RWPE1 (cell line): ENCODE measurements at regions of chr6 and their contacts with region 1.

Region 1: DNA sequence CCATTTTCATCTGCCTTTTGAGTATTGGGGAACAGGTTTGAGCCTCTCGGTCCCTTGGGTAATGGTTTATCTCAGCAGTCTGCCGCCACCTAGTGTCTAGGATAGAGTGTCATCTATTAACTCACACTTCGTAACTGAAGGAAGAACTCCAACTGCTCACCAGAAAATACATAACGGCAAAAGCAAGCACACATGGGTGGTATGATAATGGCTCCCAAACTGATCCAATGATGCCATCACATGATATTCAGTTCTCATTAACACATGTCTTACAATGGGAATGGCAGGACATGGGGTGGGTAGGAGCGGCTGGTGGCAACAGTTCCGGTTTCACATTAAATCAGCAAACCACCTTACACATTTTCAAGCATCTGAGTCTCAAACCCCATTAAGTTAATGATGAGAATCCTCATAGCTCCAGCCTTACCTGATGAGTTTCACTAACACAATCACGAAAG is 110.7 kb upstream of the PHACTR1 start:
- DNase-seq: peak; percentile 60
- H3K27ac ChIP-seq: no peak overlapping the region
- CTCF ChIP-seq: peak; percentile 78

Region 2: DNA sequence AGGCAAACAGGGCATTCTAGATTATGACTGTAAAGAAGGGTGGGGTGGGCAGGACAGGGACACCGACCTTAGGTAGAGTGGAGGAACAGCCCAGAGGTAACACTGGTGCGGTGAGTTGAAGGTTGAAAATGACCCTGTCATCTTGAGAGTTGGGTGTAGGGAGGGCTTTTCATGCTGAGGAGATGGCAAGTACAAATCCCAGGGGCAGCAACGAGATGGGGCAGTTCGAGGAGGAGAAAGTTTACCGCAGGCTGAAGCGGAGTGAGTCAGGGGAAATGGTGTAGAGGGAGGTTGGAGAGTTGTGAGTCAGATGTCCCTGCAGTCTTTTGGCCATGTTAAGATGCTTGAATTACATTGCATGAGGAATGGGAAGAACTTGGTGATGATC is 492.7 kb before region 1 on chr6:
- CTCF ChIA-PET with region 1: no interaction called
- POLR2A ChIA-PET with region 1: no interaction called
- DNase-seq: peak; percentile 51
- H3K27ac ChIP-seq: no peak overlapping the region
- CTCF ChIP-seq: no peak

Region 3: GRCh38 chr6:12289933-12290820 is 315.7 kb before region 1 on chr6 and contains the start of gene EDN1:
- CTCF ChIA-PET with region 1: interaction called, 14 read pairs
- POLR2A ChIA-PET with region 1: no interaction called
- DNase-seq: peak; percentile 76
- H3K27ac ChIP-seq: peak within 1 kb of the TSS; percentile 91
- CTCF ChIP-seq: peak; percentile 47

Region 4: GRCh38 chr6:12903246-12903645 is 297.3 kb after region 1 on chr6:
- CTCF ChIA-PET with region 1: no interaction called
- POLR2A ChIA-PET with region 1: no interaction called
- DNase-seq: no peak
- H3K27ac ChIP-seq: no peak overlapping the region
- CTCF ChIP-seq: no peak